ENCODE measurements at regions of chr5 and their contacts with region 1.

Region 1: DNA sequence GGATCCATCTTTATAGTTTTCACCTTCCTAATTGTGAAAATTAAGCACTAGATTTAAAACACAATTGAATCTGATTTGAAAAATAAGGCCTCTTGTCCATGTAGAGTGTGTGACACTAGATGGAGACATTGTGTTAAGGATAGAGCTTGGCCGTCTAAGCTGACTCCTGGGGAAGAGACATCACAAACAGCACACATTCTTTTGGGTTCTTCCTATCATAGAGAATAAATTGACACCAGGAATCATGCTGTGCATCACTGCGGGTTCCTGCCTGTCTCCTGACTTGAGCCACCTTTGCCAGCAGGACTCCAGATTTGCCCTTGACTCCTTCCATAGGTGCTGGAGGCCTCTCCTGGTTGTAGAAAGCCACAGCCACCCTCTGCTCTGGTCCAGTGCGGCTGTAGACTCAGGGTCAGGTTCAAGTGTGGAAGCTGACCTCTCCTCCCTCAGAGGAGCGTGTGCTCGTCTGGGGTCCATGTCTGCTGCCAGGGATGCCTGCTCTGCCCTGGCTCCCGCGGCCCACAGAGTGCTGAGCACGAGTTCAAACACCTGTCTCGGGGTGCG is 11.2 kb downstream of the ROPN1L start:
- DNase-seq: peak; percentile 14 to 78
- ATAC-seq: peak; percentile 83 to 97 (median 96)
- H3K4me3 ChIP-seq: no peak overlapping the region
- H3K4me3 Mint-ChIP-seq: no peak overlapping the region
- H3K27ac ChIP-seq: no peak overlapping the region
- H3K27ac Mint-ChIP-seq: no peak overlapping the region
- H3K4me1 ChIP-seq: no peaks in the 10 kb centered on the region
- H3K4me1 Mint-ChIP-seq: peaks cover 16 to 21% of the 10 kb centered on the region in 2 donors
- H3K27me3 ChIP-seq: no peaks in the 10 kb centered on the region
- H3K27me3 Mint-ChIP-seq: no peaks in the 10 kb centered on the region
- CTCF ChIP-seq: peak; percentile 65

Region 2: GRCh38 chr5:10441083-10441991 is 11.5 kb before region 1 on chr5 and contains the start of gene ROPN1L:
- intact Hi-C with region 1: no loop called
- DNase-seq: peak; percentile 80 to 88
- ATAC-seq: peak; percentile 96 to 97 (median 96)
- H3K4me3 ChIP-seq: peak within 1 kb of the TSS; percentile 88
- H3K4me3 Mint-ChIP-seq: peak within 1 kb of the TSS; percentile 89
- H3K27ac ChIP-seq: peak within 1 kb of the TSS; percentile 42
- H3K27ac Mint-ChIP-seq: peak within 1 kb of the TSS; percentile 26 to 83
- H3K4me1 ChIP-seq: peaks cover 45% of the 10 kb centered on the region
- H3K4me1 Mint-ChIP-seq: peaks cover 38 to 40% of the 10 kb centered on the region in 2 donors
- H3K27me3 ChIP-seq: no peaks in the 10 kb centered on the region
- H3K27me3 Mint-ChIP-seq: no peaks in the 10 kb centered on the region
- CTCF ChIP-seq: no peak
- total RNA-seq, gene ROPN1L: 1.2 to 5.2 (median 4.3) TPM

Region 3: DNA sequence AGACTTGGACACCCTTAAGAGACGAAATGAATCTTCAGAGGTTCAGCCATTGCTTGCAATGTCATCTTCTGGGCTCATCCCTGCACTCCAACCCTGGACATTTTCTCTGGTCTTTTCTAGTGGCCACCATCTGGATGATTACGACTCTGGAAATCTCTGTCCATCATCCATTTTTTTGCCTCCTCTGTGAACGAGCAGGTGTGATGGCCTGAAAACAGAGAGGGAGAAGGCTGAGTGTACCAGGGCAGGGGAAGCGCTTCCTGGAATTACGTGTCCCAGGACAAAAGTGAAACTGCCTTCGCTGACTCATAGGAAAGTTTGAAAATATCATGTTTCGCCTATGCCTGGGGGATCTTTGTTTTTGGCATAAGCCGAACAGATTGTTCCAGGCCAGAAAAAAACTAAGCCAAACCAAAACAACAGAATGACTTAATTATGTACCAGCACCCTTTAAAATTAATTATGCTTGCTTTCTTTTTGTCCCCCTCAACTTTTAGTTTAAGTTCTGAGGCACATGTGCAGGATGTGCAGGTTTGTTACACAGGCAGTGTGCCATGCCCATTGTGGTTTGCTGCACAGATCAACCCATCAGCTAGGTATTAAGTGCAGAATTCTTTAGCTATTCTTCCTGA is 142.9 kb after region 1 on chr5:
- intact Hi-C with region 1: no loop called
- DNase-seq: peak in 1 of 2 donors; percentile 17
- ATAC-seq: no peak
- H3K4me3 ChIP-seq: no peak overlapping the region
- H3K4me3 Mint-ChIP-seq: no peak overlapping the region
- H3K27ac ChIP-seq: no peak overlapping the region
- H3K27ac Mint-ChIP-seq: no peak overlapping the region
- H3K4me1 ChIP-seq: no peaks in the 10 kb centered on the region
- H3K4me1 Mint-ChIP-seq: peaks cover 10 to 13% of the 10 kb centered on the region in 2 donors
- H3K27me3 ChIP-seq: no peaks in the 10 kb centered on the region
- H3K27me3 Mint-ChIP-seq: peaks cover 0 to 3% of the 10 kb centered on the region in 2 donors
- CTCF ChIP-seq: no peak

Region 4: DNA sequence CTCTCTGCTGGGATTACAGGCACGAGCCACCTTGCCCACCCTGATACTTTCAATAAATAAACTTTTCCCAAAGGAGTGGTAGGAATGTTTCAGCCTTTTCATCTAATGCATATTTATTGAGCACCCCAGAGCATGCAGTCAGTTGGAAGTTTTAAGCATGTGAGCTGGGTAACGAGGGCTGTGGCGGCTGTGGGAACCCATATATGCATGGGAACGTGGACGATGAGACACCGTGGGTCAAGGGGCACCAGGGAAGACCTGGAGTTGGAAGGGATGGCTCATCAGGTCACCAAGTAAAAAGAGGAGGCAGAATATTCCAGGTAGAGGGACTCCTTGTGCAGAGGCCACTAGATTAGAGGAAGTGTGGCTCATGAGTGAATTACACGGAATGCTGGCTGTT is 175.8 kb after region 1 on chr5:
- intact Hi-C with region 1: loop called (anchors 1 kb)
- DNase-seq: no peak
- ATAC-seq: no peak
- H3K4me3 ChIP-seq: no peak overlapping the region
- H3K4me3 Mint-ChIP-seq: no peak overlapping the region
- H3K27ac ChIP-seq: no peak overlapping the region
- H3K27ac Mint-ChIP-seq: peak overlapping the region in 1 of 2 donors; percentile 35
- H3K4me1 ChIP-seq: peaks cover 38% of the 10 kb centered on the region
- H3K4me1 Mint-ChIP-seq: peaks cover 19 to 33% of the 10 kb centered on the region in 2 donors
- H3K27me3 ChIP-seq: no peaks in the 10 kb centered on the region
- H3K27me3 Mint-ChIP-seq: peaks cover 0 to 6% of the 10 kb centered on the region in 2 donors
- CTCF ChIP-seq: no peak

Measured in natural killer cell (primary cell).